Mammary epithelial cell (primary cell): ENCODE measurements at regions of chr6 and their contacts with region 1.

Region 1: DNA sequence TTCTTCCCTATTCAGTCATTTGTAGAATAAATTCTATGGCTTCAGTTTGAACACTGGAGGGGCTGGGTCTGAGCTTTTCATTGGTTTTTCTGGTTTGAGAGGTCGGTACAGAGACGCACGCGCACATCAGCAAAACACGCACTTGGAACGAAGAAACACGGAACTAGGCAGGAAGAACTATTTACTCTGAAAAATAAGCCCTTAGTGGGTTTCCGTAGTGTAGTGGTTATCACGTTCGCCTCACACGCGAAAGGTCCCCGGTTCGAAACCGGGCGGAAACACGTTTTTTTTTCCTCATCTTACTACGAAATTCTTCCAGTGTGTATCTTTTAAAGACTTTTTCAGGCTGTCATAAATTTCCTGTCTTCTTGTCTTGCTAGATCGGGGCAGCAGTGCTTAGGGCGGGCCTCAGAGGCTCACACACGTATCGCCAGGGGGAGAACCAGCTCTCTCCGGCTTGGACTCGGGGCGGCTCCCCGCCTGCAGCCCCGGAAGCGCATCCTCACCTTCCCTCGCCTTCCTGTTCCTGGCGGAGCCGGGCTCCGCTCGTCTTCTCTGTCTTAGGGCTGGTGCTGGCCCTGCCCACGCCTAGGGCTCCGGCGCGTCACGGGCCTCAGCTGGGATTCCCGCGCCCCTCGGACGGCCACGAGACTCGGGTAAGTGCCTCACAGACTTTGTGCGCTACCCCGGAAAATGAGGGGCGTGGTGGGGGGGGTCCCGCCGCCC is at the start of gene HMGN4:
- DNase-seq: peak; percentile 92
- H3K4me3 ChIP-seq: peak within 1 kb of the TSS; percentile 65 to 77 (median 76)
- H3K27ac ChIP-seq: peak within 1 kb of the TSS; percentile 91
- H3K4me1 ChIP-seq: peaks cover 21% of the 10 kb centered on the region
- H3K27me3 ChIP-seq: no peaks in the 10 kb centered on the region
- CTCF ChIP-seq: no peak
- total RNA-seq, gene HMGN4: 74.6 to 81.5 TPM

Region 2: GRCh38 chr6:26054857-26055669 is 482.9 kb before region 1 on chr6:
- CTCF ChIA-PET with region 1: no interaction called
- dilution Hi-C with region 1: no loop called
- in situ Hi-C with region 1: no loop called
- intact Hi-C with region 1: loop called (anchors 10 kb)
- DNase-seq: peak; percentile 92
- H3K4me3 ChIP-seq: peak overlapping the region; percentile 61 to 82 (median 62)
- H3K27ac ChIP-seq: peak overlapping the region; percentile 91
- H3K4me1 ChIP-seq: peaks cover 9% of the 10 kb centered on the region
- H3K27me3 ChIP-seq: no peaks in the 10 kb centered on the region
- CTCF ChIP-seq: peak in 1 of 2 donors; percentile 19

Region 3: GRCh38 chr6:26457806-26458688 is 80.0 kb before region 1 on chr6 and contains the start of gene BTN2A1:
- CTCF ChIA-PET with region 1: no interaction called
- dilution Hi-C with region 1: no loop called
- in situ Hi-C with region 1: no loop called
- intact Hi-C with region 1: loop called (anchors 5 kb)
- DNase-seq: peak; percentile 88
- H3K4me3 ChIP-seq: peak within 1 kb of the TSS; percentile 85 to 97 (median 86)
- H3K27ac ChIP-seq: peak within 1 kb of the TSS; percentile 91
- H3K4me1 ChIP-seq: peaks cover 8% of the 10 kb centered on the region
- H3K27me3 ChIP-seq: no peaks in the 10 kb centered on the region
- CTCF ChIP-seq: no peak
- total RNA-seq, gene BTN2A1: 7.8 to 19.2 TPM

Region 4: DNA sequence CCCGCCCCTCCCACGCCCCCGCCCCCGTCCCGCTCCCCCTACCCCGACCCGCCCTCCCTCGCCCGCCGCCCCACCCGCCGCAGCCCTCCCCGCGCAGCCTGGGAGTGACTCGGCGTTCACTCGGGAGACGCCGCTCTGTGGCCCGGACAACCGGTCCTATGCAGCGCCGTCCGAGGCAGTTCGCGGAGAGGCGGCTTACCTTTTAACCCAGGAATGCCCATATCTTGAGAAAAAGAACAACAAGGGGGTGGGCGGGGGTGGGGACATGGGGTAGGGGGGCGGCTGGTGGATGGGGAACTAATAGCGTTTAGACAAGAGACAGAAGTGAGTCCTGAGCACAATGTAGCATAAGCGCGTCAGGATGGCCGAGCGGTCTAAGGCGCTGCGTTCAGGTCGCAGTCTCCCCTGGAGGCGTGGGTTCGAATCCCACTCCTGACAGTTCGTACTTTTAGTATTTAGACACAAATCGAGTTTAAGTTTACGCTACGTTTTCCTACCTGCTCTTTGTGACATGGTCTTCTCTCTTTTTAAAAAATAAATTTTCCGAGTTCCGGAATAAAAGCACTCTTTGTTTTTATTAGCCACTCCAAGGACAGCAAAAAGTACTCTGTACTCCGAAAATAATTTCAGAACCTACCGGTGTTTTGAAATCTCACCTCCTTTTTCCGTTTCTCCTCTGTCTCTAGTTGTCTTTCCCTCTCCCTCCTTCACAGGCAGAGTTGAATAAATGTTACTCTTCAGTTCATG is 17.0 kb before region 1 on chr6:
- CTCF ChIA-PET with region 1: interaction called, 3 read pairs
- dilution Hi-C with region 1: no loop called
- in situ Hi-C with region 1: no loop called
- intact Hi-C with region 1: loop called (anchors 1 kb)
- DNase-seq: peak; percentile 79
- H3K4me3 ChIP-seq: peak overlapping the region; percentile 54 to 62 (median 55)
- H3K27ac ChIP-seq: peak overlapping the region; percentile 52
- H3K4me1 ChIP-seq: peaks cover 15% of the 10 kb centered on the region
- H3K27me3 ChIP-seq: no peaks in the 10 kb centered on the region
- CTCF ChIP-seq: no peak

Region 5: GRCh38 chr6:26568601-26569432 is 30.8 kb after region 1 on chr6:
- CTCF ChIA-PET with region 1: no interaction called
- dilution Hi-C with region 1: no loop called
- in situ Hi-C with region 1: no loop called
- intact Hi-C with region 1: loop called (anchors 1 kb)
- DNase-seq: peak; percentile 85
- H3K4me3 ChIP-seq: peak overlapping the region; percentile 62 to 73 (median 71)
- H3K27ac ChIP-seq: no peak overlapping the region
- H3K4me1 ChIP-seq: no peaks in the 10 kb centered on the region
- H3K27me3 ChIP-seq: no peaks in the 10 kb centered on the region
- CTCF ChIP-seq: peak in 1 of 2 donors; percentile 27

Region 6: GRCh38 chr6:26581164-26581915 is 43.3 kb after region 1 on chr6:
- CTCF ChIA-PET with region 1: no interaction called
- dilution Hi-C with region 1: no loop called
- in situ Hi-C with region 1: no loop called
- intact Hi-C with region 1: no loop called
- DNase-seq: no peak
- H3K4me3 ChIP-seq: no peak overlapping the region
- H3K27ac ChIP-seq: no peak overlapping the region
- H3K4me1 ChIP-seq: peaks cover 5% of the 10 kb centered on the region
- H3K27me3 ChIP-seq: no peaks in the 10 kb centered on the region
- CTCF ChIP-seq: no peak

Region 7: GRCh38 chr6:27472617-27473400 is 934.8 kb after region 1 on chr6 and contains the start of gene ZNF184:
- CTCF ChIA-PET with region 1: no interaction called
- dilution Hi-C with region 1: no loop called
- in situ Hi-C with region 1: no loop called
- intact Hi-C with region 1: loop called (anchors 10 kb)
- DNase-seq: peak; percentile 99
- H3K4me3 ChIP-seq: peak within 1 kb of the TSS; percentile 59 to 79 (median 63)
- H3K27ac ChIP-seq: peak within 1 kb of the TSS; percentile 86
- H3K4me1 ChIP-seq: peaks cover 6% of the 10 kb centered on the region
- H3K27me3 ChIP-seq: no peaks in the 10 kb centered on the region
- CTCF ChIP-seq: no peak
- total RNA-seq, gene ZNF184: 3.4 to 7.2 TPM